RWPE1 (cell line): ENCODE measurements at regions of chr1 and their contacts with region 1.

Region 1: GRCh38 chr1:43934101-43934985 is 742 bp downstream of the ARTN start:
- DNase-seq: peak; percentile 67
- H3K27ac ChIP-seq: peak overlapping the region; percentile 96
- CTCF ChIP-seq: peak; percentile 84

Region 2: DNA sequence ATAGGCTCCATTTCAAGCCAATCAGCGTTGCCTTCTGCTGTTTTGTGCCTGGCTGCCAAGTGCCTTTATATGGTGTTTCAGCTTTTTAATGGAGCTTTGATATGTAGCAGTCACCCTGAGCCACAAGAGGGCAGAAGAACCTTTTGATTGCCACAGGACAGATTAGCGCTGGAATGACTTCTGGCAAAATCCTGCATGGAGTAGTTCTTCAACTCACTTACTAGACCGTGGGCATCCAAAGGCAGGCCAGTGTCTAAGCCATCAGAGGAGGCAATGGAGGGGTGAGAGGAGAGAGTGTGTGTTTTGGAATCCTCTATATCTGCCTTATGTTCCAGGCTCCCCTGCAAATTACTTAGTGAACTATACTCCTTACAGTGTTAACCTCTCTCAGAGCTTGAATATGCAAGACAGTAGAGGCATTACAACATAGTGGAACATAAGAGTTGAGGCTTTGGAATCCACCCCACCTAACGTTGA is 170.8 kb before region 1 on chr1:
- CTCF ChIA-PET with region 1: interaction called, 150 read pairs
- POLR2A ChIA-PET with region 1: interaction called, 6 read pairs
- DNase-seq: peak; percentile 71
- H3K27ac ChIP-seq: no peak overlapping the region
- CTCF ChIP-seq: peak; percentile 85

Region 3: GRCh38 chr1:43861337-43861736 is 73.0 kb before region 1 on chr1:
- CTCF ChIA-PET with region 1: interaction called, 12 read pairs
- POLR2A ChIA-PET with region 1: no interaction called
- DNase-seq: peak; percentile 65
- H3K27ac ChIP-seq: peak overlapping the region; percentile 92
- CTCF ChIP-seq: no peak

Region 4: GRCh38 chr1:43914576-43915505 is 19.5 kb before region 1 on chr1:
- CTCF ChIA-PET with region 1: interaction called, 14 read pairs
- POLR2A ChIA-PET with region 1: interaction called, 3 read pairs
- DNase-seq: peak; percentile 62
- H3K27ac ChIP-seq: peak overlapping the region; percentile 100
- CTCF ChIP-seq: no peak

Region 5: GRCh38 chr1:43968348-43968948 is 34.1 kb after region 1 on chr1:
- CTCF ChIA-PET with region 1: interaction called, 3 read pairs
- POLR2A ChIA-PET with region 1: interaction called, 10 read pairs
- DNase-seq: no peak
- H3K27ac ChIP-seq: no peak overlapping the region
- CTCF ChIP-seq: no peak